ENCODE measurements at regions of chr7 and their contacts with region 1.

Region 1: GRCh38 chr7:75624134-75624832 is 114.5 kb downstream of the HIP1 start:
- DNase-seq: no peak
- H3K4me3 ChIP-seq: no peak overlapping the region
- H3K4me3 Mint-ChIP-seq: no peak overlapping the region
- H3K27ac Mint-ChIP-seq: peak overlapping the region; percentile 6
- H3K4me1 ChIP-seq: no peaks in the 10 kb centered on the region
- H3K4me1 Mint-ChIP-seq: no peaks in the 10 kb centered on the region
- H3K27me3 ChIP-seq: no peaks in the 10 kb centered on the region
- H3K27me3 Mint-ChIP-seq: no peaks in the 10 kb centered on the region
- CTCF ChIP-seq: no peak

Region 2: DNA sequence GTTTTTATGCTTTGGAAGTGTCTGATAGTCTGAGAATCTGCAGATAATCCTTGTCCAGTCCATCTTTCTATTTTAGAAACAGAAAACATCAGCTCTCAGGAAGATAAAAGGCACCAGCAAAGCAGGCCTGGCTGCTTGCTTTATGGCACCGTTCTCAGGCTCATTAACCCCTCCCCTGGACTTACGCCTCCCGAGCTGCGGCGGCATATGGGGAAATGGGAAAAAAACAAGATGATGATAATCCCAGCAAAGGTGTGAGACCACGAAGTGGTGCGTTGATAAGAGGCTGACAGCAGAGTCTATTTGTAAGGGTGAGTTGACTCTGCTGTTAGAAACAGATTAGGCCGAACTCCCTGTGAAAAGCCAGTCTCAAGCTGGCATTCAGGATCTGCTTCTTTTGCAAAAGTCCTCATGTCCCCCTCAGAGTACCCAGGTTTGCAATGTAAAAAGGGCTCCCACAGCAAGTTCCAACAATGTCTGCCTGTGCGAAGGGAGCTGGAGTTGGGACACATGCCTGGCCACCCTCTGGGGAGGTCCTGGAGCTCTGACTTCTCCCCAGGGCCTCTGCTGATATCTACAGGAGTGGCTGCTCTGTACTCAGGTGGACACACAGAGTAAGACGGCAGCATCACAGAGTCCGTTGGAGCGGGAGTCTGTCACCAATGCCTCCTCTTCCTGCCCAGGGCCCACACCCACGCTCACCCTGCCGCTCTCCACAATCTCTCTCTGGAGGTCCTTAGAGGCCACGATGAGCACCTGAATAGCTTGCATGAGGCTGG is 77.9 kb before region 1 on chr7:
- CTCF ChIA-PET with region 1: no interaction called
- POLR2A ChIA-PET with region 1: no interaction called
- intact Hi-C with region 1: no loop called
- DNase-seq: no peak
- H3K4me3 ChIP-seq: no peak overlapping the region
- H3K4me3 Mint-ChIP-seq: no peak overlapping the region
- H3K27ac Mint-ChIP-seq: no peak overlapping the region
- H3K4me1 ChIP-seq: no peaks in the 10 kb centered on the region
- H3K4me1 Mint-ChIP-seq: no peaks in the 10 kb centered on the region
- H3K27me3 ChIP-seq: no peaks in the 10 kb centered on the region
- H3K27me3 Mint-ChIP-seq: no peaks in the 10 kb centered on the region
- CTCF ChIP-seq: no peak

Region 3: DNA sequence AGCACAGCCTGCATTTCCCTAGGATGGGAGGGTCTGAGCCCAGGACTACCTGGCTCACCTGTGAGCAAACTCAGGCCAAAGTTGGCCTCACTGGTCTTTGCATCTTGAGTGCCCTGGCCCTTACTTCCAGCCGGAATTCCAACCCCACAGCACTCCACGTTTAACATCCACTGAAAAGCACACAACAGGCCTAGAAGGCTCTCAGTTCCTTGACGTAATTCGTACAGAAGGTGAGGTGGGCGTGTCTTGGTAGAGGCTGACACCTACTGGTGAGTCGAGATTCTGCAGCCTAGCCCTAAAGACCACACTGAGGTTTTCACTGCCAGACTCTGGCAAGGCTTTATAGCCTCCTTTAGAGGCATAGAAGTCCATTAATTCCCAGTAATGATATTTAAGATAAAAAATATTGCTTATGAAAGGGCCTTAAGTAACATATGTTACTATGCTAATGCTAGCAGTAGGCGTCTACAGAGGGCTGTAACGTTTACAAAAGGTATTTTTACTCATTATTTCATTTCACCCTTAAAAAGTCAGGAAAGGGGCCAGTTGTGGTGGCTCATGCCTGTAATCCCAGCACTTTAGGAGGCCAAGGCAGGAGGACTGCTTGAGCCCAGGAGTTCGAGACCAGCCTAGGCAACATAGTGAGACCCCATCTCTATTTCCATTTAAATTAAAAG is 18.7 kb after region 1 on chr7:
- CTCF ChIA-PET with region 1: no interaction called
- POLR2A ChIA-PET with region 1: no interaction called
- intact Hi-C with region 1: no loop called
- DNase-seq: peak; percentile 67 to 68
- H3K4me3 ChIP-seq: no peak overlapping the region
- H3K4me3 Mint-ChIP-seq: no peak overlapping the region
- H3K27ac Mint-ChIP-seq: no peak overlapping the region
- H3K4me1 ChIP-seq: no peaks in the 10 kb centered on the region; the same call in 1 of the 2 replicates
- H3K4me1 Mint-ChIP-seq: peaks cover 12% of the 10 kb centered on the region
- H3K27me3 ChIP-seq: no peaks in the 10 kb centered on the region
- H3K27me3 Mint-ChIP-seq: no peaks in the 10 kb centered on the region
- CTCF ChIP-seq: peak; percentile 47 to 77

Region 4: DNA sequence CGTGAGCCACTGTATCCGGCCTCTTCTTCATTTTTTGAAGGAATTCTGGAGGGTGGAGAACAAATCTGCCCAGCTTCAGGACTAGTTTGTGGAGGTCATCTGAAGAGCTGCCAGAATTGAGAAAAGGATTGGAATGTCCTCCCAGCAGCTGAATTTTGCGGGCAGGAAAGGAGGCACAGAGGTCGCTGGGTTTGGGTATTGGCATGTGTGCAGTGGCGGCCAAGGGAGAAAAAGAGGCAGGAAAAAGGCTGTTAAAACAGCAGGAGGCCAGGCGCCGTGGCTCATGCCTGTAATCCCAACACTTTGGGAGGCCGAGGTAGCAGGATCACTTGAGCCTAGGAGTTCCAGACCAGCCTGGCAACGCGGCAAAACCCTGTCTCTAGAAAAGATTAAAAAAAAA is 34.1 kb after region 1 on chr7:
- CTCF ChIA-PET with region 1: no interaction called
- POLR2A ChIA-PET with region 1: no interaction called
- intact Hi-C with region 1: loop called (anchors 1 kb)
- DNase-seq: no peak
- H3K4me3 ChIP-seq: no peak overlapping the region
- H3K4me3 Mint-ChIP-seq: no peak overlapping the region
- H3K27ac Mint-ChIP-seq: no peak overlapping the region
- H3K4me1 ChIP-seq: no peaks in the 10 kb centered on the region
- H3K4me1 Mint-ChIP-seq: no peaks in the 10 kb centered on the region
- H3K27me3 ChIP-seq: no peaks in the 10 kb centered on the region
- H3K27me3 Mint-ChIP-seq: no peaks in the 10 kb centered on the region
- CTCF ChIP-seq: no peak